Mammary epithelial cell (primary cell): ENCODE measurements at regions of chr1 and their contacts with region 1.

Region 1: DNA sequence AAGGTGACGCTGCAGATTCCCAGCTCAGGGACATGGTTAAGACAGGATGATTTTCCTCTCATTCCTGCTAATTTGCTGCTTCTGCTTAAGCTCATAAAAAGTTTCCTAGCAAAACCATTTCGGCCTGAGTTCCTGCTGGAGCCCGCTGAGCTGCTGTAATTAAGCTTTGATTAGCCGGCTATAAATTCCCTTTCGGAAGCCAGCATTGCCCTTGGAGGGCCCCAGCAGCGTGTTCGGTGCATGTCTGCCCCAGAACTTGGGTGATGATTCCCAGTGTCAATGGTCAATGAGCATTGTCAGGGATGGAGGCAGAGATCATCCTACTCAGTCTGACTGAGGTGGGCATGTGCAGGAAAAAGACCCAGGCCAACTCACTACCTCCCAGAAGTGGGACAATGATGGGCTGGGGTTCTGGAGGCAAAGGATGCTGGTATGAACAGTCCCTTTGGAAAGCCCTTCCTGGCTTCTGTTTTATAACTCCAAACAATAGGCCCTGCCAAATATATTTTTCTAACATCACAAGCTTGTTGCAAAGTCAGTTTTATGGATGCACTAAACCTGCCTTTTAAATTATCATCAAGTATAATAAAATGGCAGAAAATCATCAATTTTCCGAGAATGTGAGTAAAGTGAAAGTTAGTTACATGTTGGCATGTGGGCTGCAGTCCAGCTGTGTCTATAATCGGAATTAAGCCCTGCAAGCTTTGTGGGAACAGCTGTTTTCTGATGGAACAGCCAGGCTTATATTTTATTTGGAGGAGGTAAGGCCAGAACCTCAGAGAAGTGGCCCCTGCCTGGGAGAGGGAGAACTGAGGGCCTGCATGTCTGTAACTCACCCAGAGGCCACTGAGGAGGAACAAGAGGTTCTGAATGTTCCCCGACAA is 257.1 kb downstream of the GRIK3 start:
- DNase-seq: no peak
- H3K4me3 ChIP-seq: no peak overlapping the region
- H3K27ac ChIP-seq: no peak overlapping the region
- H3K4me1 ChIP-seq: no peaks in the 10 kb centered on the region
- H3K27me3 ChIP-seq: peaks cover 7% of the 10 kb centered on the region
- CTCF ChIP-seq: no peak

Region 2: GRCh38 chr1:36570006-36570768 is 207.0 kb before region 1 on chr1:
- CTCF ChIA-PET with region 1: no interaction called
- dilution Hi-C with region 1: loop called (anchors 5 kb)
- in situ Hi-C with region 1: no loop called
- intact Hi-C with region 1: no loop called
- DNase-seq: no peak
- H3K4me3 ChIP-seq: no peak overlapping the region
- H3K27ac ChIP-seq: no peak overlapping the region
- H3K4me1 ChIP-seq: no peaks in the 10 kb centered on the region
- H3K27me3 ChIP-seq: no peaks in the 10 kb centered on the region
- CTCF ChIP-seq: no peak

Region 3: DNA sequence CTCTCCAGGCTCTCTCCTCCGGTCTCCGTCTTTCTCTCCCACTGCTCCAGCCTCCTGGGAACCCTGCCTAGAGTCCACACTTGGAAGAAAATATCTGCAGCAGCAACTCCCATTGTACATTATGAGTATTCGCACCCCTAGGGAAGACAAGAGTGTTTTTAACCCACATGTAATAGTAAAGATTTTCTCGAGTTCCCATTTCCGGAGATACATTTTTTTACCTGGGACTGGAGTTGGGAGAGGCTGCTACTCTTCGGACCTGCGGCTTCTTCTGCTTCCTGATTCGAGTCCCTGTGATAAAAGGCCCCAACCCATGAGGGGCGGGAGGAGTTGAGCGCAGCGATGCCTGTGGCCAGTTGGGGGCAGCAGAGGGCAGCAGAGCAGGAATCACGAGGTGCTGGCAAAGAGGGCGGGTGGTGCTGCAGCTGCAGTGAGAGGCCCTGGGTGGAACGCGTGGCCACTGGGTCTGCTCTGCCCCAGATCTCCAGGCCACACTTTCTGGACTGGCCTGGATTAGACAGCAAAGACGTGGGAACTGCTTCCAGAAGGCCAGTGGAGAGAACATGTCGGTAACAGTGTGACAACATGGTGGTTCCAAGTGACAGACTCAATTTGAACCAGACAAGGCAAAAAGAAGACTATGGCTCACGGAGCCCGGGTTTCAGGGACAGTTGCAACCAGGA is 73.5 kb before region 1 on chr1:
- CTCF ChIA-PET with region 1: no interaction called
- dilution Hi-C with region 1: loop called (anchors 5 kb)
- in situ Hi-C with region 1: no loop called
- intact Hi-C with region 1: no loop called
- DNase-seq: peak; percentile 37
- H3K4me3 ChIP-seq: no peak overlapping the region
- H3K27ac ChIP-seq: no peak overlapping the region
- H3K4me1 ChIP-seq: no peaks in the 10 kb centered on the region
- H3K27me3 ChIP-seq: peaks cover 2% of the 10 kb centered on the region
- CTCF ChIP-seq: peak; percentile 87 to 90

Region 4: DNA sequence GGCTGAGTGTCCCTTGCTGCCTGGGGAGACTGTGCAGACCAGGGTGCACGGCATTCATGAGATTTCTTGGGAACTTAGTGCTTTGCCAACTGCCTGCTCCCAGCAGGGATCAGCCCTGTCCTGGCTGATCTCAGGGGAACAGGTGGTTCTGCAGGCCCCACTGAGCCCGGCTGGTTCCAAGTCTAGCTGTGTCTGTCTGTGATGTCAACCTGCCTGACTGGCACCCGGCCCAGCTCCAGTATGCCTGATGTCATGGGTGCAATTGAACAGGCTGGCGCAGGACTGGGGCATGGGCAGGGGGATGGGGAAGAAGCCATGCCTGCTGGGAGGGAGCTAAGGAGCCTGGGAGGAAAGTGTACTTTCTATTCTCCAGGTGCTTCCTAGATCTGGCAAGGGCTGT is 30.1 kb after region 1 on chr1:
- CTCF ChIA-PET with region 1: no interaction called
- dilution Hi-C with region 1: no loop called
- in situ Hi-C with region 1: no loop called
- intact Hi-C with region 1: no loop called
- DNase-seq: no peak
- H3K4me3 ChIP-seq: no peak overlapping the region
- H3K27ac ChIP-seq: no peak overlapping the region
- H3K4me1 ChIP-seq: no peaks in the 10 kb centered on the region
- H3K27me3 ChIP-seq: no peaks in the 10 kb centered on the region
- CTCF ChIP-seq: no peak

Region 5: GRCh38 chr1:36856131-36856530 is 78.9 kb after region 1 on chr1:
- CTCF ChIA-PET with region 1: no interaction called
- dilution Hi-C with region 1: loop called (anchors 5 kb)
- in situ Hi-C with region 1: no loop called
- intact Hi-C with region 1: no loop called
- DNase-seq: no peak
- H3K4me3 ChIP-seq: no peak overlapping the region
- H3K27ac ChIP-seq: no peak overlapping the region
- H3K4me1 ChIP-seq: no peaks in the 10 kb centered on the region
- H3K27me3 ChIP-seq: no peaks in the 10 kb centered on the region
- CTCF ChIP-seq: no peak

Region 6: DNA sequence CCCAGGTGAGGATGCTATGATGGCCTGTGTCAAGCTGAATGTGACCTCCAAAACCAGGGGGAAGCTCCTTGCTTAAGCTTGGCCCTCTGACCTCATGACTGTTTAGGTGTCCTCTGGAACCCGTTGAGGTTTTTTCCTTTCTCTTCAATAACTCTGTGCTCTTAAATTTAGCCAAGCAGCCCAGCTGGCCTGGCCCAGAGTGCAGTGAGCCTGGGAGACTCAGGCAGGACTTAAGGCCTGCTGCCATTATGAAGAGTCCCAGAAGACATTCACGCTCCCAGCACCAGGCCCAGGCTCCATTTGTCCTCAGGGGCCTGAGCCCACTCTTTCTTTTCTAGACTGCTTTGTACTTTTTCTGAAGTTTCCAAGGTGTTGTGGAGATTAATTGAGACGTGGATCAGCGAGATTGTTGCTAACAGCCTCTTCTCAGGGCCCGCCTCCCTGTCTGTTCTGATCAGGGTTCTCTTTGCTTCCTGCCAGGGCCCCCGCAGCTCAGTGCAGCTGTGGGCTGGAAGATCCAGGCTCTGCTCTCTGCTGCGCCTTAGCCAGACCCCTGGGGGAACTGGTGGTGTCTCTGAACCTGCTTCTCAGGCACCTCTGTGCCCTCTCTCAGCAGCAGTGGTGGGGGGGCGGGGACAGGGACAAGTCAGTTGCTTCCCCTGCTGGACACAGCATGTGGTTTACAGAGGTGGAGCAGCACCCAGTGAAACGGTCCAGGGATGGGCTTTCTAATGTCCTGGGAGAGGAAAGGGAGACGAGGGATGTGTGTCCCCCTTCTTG is 132.9 kb after region 1 on chr1:
- CTCF ChIA-PET with region 1: no interaction called
- dilution Hi-C with region 1: no loop called
- in situ Hi-C with region 1: no loop called
- intact Hi-C with region 1: no loop called
- DNase-seq: no peak
- H3K4me3 ChIP-seq: no peak overlapping the region
- H3K27ac ChIP-seq: no peak overlapping the region
- H3K4me1 ChIP-seq: no peaks in the 10 kb centered on the region
- H3K27me3 ChIP-seq: no peaks in the 10 kb centered on the region
- CTCF ChIP-seq: no peak